ENCODE measurements at regions of chr14 and their contacts with region 1.

Region 1: DNA sequence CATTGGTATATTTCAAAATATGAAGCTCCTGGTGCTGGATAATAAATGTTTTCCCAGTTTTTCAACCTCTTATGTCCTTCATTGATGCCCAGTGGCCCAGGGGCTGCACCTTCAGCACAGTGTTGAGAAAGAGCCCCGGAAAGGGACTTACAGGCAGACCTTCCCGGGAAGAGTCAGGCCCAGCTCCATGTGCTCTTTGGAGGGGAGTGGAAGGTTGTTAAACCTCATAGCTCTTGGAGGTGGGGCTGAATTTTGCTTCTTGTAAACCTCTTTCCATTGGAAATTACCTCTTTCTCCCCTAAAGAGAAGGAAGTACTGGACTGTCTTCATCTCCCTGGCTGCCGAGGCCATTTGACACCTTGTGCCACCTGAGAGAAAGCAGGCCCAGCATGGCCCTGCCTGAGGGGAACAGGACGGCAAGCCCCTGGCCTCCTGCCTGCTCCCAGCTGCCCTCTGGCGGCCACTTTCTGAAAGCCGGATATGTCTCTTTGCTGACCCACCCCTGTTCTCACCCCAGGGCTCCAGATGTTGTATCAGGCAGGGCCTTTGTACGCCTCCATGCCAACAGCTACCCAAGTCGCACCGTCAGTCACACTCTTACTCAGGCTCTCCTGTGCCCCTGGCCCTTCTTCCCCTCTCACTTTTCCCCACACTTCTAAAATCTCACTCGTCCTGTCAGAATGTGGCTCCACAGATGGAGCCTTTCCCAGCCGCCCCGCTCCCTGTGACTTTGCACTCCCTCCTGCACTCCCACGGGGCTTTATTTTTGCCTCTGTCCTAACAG is 43.0 kb downstream of the EVL start:
- DNase-seq: peak; percentile 85
- CTCF ChIP-seq: peak; percentile 76

Region 2: DNA sequence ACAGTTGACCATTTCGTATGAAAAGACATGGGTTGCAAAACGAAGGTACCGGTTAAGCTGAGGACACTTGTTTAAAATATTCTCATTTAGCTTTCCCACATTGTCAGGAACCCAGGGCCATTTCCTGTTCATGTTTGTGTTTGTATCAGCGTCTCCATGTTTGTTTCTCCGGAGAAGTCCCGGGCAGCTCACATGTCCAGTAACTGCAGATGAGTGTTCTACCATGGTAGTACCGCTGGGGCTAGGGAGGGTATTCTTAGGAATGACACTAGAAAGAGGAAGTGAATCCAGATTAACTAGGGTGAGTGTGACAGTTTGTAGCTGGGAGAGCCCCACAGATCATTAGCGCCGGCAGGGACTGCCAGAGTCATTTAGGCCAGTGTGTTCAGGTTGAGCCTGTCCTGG is 93.0 kb before region 1 on chr14:
- CTCF ChIA-PET with region 1: interaction called, 11 read pairs
- POLR2A ChIA-PET with region 1: no interaction called
- DNase-seq: peak; percentile 63
- CTCF ChIP-seq: no peak

Region 3: GRCh38 chr14:100025111-100025510 is 83.1 kb before region 1 on chr14:
- CTCF ChIA-PET with region 1: interaction called, 11 read pairs
- POLR2A ChIA-PET with region 1: no interaction called
- DNase-seq: peak; percentile 53
- CTCF ChIP-seq: peak; percentile 59

Region 4: GRCh38 chr14:100056964-100057795 is 51.1 kb before region 1 on chr14:
- CTCF ChIA-PET with region 1: interaction called, 12 read pairs
- POLR2A ChIA-PET with region 1: no interaction called
- DNase-seq: peak; percentile 69
- CTCF ChIP-seq: peak; percentile 49

Region 5: DNA sequence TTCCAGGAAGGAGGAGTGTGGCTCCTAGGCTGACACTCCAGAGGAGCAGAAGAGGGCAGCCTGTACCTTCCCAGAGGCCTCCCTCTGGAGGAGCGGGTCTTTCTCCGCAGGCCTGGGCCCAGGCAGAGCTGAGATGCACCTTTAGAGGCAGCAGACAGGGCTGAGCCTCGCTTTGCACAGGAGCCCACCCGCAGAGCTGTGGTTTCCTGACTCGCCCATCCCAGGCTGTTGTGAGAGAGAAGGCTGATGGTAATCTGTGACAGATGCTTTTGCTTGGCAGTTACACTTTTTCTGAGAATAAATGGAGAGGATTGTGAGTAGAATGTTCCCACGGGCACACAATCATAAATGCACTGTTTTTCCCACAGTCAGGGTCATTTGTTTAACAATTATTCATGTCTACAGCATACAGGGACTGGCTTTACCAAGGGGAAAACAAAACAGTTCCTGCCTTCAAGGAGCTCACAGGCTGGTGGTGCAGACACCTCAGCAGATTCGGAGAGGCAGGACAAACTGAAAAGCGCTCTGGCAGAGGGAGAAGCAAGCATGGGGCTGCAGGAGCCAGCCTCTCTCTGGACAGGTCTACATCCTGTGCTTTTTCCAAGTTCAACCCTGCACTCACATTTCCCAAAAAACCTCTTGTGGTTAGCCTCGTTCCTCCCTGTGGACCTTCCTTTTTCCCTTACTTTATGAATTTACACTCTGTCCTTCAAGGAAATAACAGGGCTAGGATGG is 29.1 kb before region 1 on chr14:
- CTCF ChIA-PET with region 1: interaction called, 336 read pairs
- POLR2A ChIA-PET with region 1: no interaction called
- DNase-seq: peak; percentile 39
- CTCF ChIP-seq: peak; percentile 2

Region 6: GRCh38 chr14:100096570-100096971 is 11.7 kb before region 1 on chr14:
- CTCF ChIA-PET with region 1: interaction called, 30 read pairs
- POLR2A ChIA-PET with region 1: no interaction called
- DNase-seq: no peak
- CTCF ChIP-seq: no peak

Region 7: GRCh38 chr14:100129161-100129681 is 21.0 kb after region 1 on chr14:
- CTCF ChIA-PET with region 1: interaction called, 17 read pairs
- POLR2A ChIA-PET with region 1: interaction called, 5 read pairs
- DNase-seq: no peak
- CTCF ChIP-seq: no peak

Measured in GM10248 (cell line).